OCI-LY7 (cell line): ENCODE measurements at regions of chr21 and their contacts with region 1.

Region 1: DNA sequence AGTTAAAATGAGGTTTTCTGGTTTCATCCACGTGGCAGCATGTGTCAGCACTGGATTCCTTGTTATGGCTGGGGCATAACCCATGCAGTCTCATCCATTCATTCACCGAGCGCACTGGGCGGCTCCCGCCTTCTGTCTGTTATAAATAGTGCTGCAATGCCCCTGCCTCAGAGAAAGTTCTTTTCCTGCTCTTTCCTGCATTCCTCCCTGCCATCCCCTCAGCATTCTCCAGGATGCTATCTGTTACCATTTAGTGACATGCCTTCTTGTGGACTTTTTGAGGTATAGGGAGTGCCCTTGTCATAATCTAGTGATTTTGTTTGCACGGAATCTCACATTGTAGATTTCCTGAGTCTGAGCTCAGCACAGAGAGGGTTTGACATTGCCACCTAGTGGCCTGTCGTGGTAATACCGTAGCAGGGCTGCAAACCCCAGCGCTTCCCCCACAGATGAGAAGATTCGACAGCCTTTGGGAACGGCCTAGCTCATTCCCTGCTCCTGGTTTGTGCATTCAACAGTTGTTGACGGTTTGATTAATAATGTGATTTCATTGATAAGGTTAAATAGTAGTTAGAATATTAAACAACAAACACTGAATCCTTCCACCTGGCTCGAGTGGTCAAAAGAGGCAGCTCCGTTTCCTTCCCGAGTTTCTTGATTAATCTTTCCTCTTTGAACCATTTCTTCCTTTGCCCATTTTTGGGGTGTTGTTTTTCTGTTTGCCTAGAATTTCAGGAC is 46.3 kb downstream of the UMODL1 start:
- DNase-seq: peak; percentile 84
- H3K4me3 ChIP-seq: peak overlapping the region; percentile 10
- H3K27ac ChIP-seq: peak overlapping the region; percentile 93
- H3K4me1 ChIP-seq: peaks cover 70% of the 10 kb centered on the region
- CTCF ChIP-seq: peak; percentile 99

Region 2: DNA sequence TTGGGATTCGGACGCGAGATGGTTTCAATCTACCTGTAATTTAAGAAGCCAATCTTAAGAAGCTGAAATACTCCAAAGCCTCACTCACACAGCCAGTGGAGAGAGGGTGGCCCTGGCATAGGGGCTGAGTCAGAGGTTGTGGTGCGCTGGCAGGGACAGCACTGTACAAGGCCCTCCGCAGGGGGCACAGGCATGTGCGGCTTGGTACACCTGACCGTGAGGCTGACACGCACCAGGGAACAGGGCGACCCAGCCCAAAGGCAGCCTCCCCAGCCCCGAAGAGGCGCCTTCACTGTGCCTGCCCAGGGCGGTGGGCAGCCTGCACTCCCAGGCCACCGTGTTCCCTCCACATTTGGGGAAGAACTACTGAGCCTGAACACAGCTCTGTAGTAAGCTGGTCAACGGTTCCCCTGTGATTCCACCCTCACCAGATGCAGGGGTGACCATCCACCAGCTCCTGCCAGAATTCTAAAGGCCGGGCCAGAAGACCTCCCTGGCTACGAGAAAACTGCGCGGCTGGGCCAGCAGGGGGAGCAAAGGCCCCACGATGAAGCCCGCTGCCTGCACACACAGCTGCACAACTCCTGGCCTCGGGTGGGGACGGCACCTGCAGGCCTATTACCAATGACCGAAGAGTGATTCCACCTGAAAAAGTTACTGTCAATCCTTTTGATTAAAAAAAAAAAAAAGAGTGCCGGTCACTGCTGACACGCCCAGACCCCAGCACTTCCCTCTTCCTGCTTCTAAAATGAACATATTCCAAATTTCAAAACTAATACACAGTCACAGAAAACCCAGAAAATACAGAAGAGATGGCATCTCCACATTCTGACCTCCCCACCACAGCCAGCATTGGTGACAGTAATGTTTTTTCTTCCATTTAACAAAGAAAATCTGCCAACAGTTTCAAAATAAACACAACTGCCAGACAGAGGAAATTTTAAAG is 300.9 kb before region 1 on chr21:
- CTCF ChIA-PET with region 1: interaction called, 3 read pairs
- POLR2A ChIA-PET with region 1: interaction called, 4 read pairs
- intact Hi-C with region 1: loop called (anchors 1 kb)
- DNase-seq: peak; percentile 82
- H3K4me3 ChIP-seq: no peak overlapping the region
- H3K27ac ChIP-seq: peak overlapping the region; percentile 38
- H3K4me1 ChIP-seq: peaks cover 11% of the 10 kb centered on the region
- CTCF ChIP-seq: peak; percentile 86

Region 3: GRCh38 chr21:41903559-41904351 is 213.6 kb before region 1 on chr21:
- CTCF ChIA-PET with region 1: no interaction called
- POLR2A ChIA-PET with region 1: no interaction called
- intact Hi-C with region 1: no loop called
- DNase-seq: no peak
- H3K4me3 ChIP-seq: no peak overlapping the region
- H3K27ac ChIP-seq: no peak overlapping the region
- H3K4me1 ChIP-seq: no peaks in the 10 kb centered on the region
- CTCF ChIP-seq: no peak

Region 4: GRCh38 chr21:41926117-41926806 is 191.1 kb before region 1 on chr21:
- CTCF ChIA-PET with region 1: no interaction called
- POLR2A ChIA-PET with region 1: interaction called, 6 read pairs
- intact Hi-C with region 1: loop called (anchors 2 kb)
- DNase-seq: peak; percentile 82
- H3K4me3 ChIP-seq: peak overlapping the region; percentile 70
- H3K27ac ChIP-seq: peak overlapping the region; percentile 83
- H3K4me1 ChIP-seq: peaks cover 95% of the 10 kb centered on the region
- CTCF ChIP-seq: no peak

Region 5: DNA sequence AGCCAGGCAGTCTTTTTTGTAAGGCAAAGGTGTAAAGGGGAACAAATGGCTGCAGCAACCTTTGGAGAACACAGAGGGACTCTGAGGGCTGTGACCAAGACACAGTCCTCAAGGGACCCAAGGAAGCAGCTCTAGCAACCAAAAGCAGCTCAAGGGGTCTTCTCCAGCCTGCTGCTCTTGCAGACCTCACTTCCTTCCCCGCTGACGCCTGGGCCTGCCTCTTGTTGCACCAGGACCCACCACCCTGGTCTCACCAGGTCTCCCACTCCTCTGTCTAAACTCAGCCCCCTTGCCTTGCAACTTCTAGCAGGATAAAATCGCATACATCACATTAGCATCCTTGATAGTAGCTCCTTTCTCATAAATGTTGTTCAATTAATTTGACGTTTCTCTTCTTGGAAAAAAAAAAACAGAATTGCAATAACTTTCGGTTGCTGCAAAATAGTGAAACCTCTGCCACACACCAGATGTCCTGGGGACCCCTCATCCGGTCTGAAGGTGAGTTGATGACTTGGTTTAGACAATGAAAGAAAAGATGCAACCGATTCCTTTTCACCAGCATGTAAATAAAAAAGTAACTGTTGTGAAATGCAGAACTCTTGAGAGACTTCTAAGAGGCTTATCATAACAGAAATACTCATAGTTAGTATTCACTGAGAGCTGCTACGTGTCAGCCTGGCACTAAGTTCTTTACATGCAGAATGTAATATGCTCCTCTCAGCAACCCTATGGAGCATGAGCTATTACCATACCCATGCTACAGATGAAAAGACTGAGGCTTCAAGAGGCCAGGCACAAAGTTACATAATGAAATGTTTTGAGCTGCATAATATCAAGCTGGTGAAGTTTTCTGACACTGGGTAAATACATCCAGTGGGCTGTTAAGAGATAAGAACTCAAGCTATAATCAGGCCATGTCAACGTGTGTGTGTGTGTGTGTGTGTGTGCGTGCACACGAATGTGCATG is 12.2 kb after region 1 on chr21:
- CTCF ChIA-PET with region 1: no interaction called
- POLR2A ChIA-PET with region 1: interaction called, 23 read pairs
- intact Hi-C with region 1: no loop called
- DNase-seq: peak; percentile 47
- H3K4me3 ChIP-seq: no peak overlapping the region
- H3K27ac ChIP-seq: peak overlapping the region; percentile 63
- H3K4me1 ChIP-seq: peaks cover 34% of the 10 kb centered on the region
- CTCF ChIP-seq: no peak

Region 6: GRCh38 chr21:42440187-42440792 is 322.9 kb after region 1 on chr21:
- CTCF ChIA-PET with region 1: no interaction called
- POLR2A ChIA-PET with region 1: no interaction called
- intact Hi-C with region 1: no loop called
- DNase-seq: no peak
- H3K4me3 ChIP-seq: no peak overlapping the region
- H3K27ac ChIP-seq: no peak overlapping the region
- H3K4me1 ChIP-seq: no peaks in the 10 kb centered on the region
- CTCF ChIP-seq: no peak